ENCODE measurements at regions of chr12 and their contacts with region 1.

Region 1: GRCh38 chr12:70317781-70318180 is 48.3 kb upstream of the KCNMB4 start:
- DNase-seq: peak in 1 of 2 donors; percentile 25
- ATAC-seq: peak; percentile 60 to 80 (median 74)
- H3K4me3 ChIP-seq: no peak overlapping the region
- H3K4me3 Mint-ChIP-seq: peak overlapping the region; percentile 35
- H3K27ac ChIP-seq: no peak overlapping the region
- H3K27ac Mint-ChIP-seq: peak overlapping the region; percentile 74 to 76
- H3K4me1 ChIP-seq: no peaks in the 10 kb centered on the region
- H3K4me1 Mint-ChIP-seq: peaks cover 45 to 48% of the 10 kb centered on the region in 2 donors
- H3K27me3 ChIP-seq: no peaks in the 10 kb centered on the region
- H3K27me3 Mint-ChIP-seq: no peaks in the 10 kb centered on the region
- CTCF ChIP-seq: no peak

Region 2: GRCh38 chr12:70332236-70332635 is 14.5 kb after region 1 on chr12:
- intact Hi-C with region 1: loop called (anchors 2 kb)
- DNase-seq: no peak
- ATAC-seq: no peak
- H3K4me3 ChIP-seq: no peak overlapping the region
- H3K4me3 Mint-ChIP-seq: no peak overlapping the region
- H3K27ac ChIP-seq: no peak overlapping the region
- H3K27ac Mint-ChIP-seq: peak overlapping the region in 1 of 2 donors; percentile 5
- H3K4me1 ChIP-seq: no peaks in the 10 kb centered on the region
- H3K4me1 Mint-ChIP-seq: peaks cover 20 to 24% of the 10 kb centered on the region in 2 donors
- H3K27me3 ChIP-seq: no peaks in the 10 kb centered on the region
- H3K27me3 Mint-ChIP-seq: no peaks in the 10 kb centered on the region
- CTCF ChIP-seq: no peak